GM23248 (cell line): ENCODE measurements at regions of chr7 and their contacts with region 1.

Region 1: DNA sequence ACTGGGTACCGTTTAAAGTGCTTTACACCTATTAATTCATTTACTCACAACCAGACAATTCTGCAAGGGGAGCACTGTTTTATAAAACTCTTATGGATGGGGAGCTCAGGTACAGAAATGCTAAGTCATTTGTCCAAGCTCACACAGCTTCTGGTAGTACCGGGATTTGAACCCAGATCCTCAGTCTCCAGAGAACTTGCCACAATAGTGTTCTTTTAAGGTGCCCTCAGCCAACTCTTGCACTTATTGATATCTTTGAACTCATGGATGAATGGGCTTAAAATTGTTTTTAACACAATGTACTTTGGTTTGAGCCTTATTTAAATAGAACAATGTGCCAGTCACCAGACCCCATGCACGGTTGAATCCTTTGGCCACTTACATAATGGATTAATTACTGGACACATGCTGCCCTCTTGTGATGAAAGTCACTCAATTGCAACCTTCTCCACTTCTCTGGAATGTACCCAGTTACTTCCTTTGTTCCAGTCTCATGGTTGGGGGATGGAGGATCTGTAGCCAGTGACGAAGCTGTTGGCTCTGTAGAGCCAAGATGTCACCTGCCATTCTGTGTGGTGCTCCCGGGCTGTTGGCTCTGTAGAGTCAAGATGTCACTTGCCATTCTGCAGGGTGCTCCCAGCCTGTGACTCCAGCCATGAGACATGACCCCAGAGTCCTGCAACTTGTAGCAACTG is 65.6 kb downstream of the NOD1 start:
- DNase-seq: peak; percentile 90
- H3K4me3 ChIP-seq: no peak overlapping the region
- H3K27ac ChIP-seq: no peak overlapping the region
- H3K4me1 ChIP-seq: no peaks in the 10 kb centered on the region
- H3K27me3 ChIP-seq: no peaks in the 10 kb centered on the region

Region 2: DNA sequence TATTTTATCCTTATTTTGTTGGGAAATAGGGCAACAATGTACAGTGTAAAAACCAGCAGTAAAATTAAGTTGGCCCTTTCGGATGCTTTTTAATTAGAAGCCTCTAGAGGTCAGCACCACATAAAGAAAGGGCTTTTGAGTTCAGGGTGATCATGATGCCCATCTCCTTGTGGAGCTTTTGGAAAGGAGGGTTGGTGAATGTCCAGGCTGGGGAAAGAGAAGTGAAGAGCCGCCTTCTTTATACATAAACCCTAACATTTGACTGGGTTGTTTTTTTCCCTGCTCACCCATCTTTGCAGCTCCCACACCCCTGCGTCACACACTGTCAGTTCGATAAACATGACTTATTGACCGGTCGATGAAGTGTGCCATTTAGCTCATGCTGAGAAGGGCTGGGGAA is 248.4 kb before region 1 on chr7:
- in situ Hi-C with region 1: loop called (anchors 25 kb)
- DNase-seq: peak; percentile 76
- H3K4me3 ChIP-seq: no peak overlapping the region
- H3K27ac ChIP-seq: no peak overlapping the region
- H3K4me1 ChIP-seq: peaks cover 22% of the 10 kb centered on the region
- H3K27me3 ChIP-seq: no peaks in the 10 kb centered on the region

Region 3: DNA sequence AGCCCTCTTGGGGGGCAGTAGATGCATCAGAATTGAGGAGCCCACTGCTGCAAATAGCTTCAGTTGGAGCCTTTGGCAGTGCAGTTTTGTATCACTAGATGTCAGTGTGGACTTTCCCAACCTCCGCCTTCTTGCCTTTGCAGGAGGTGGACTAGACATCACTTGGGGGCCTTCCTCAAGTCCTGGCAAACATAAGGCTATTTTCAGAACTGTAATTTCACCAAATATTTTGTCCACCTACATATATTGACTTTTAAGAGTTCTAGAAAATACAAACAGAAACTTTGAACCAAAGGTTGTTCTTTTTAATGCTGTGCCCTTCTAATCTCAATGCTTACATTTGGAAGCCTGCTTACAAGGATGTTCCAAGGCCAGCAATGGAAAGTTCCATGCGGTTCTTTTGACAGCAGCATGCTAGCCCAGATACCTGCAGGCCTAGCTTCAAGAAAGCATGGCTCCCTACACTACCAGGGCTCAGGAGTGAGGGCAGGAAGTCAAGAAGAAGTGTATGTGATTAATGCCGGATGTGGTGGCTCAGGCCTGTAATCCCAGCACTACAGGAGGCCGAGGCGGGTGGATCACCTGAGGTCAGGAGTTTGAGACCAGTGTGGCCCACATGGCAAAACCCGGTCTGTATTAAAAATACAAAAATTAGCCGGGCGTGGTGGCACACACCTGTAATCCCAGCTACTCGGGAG is 136.6 kb before region 1 on chr7:
- in situ Hi-C with region 1: loop called (anchors 5 kb)
- DNase-seq: peak; percentile 71
- H3K4me3 ChIP-seq: no peak overlapping the region
- H3K27ac ChIP-seq: no peak overlapping the region
- H3K4me1 ChIP-seq: no peaks in the 10 kb centered on the region
- H3K27me3 ChIP-seq: no peaks in the 10 kb centered on the region